Activated CD4-positive, alpha-beta memory T cell treated with anti-CD3 and anti-CD28 coated beads for 36 hours (primary cell): ENCODE measurements at regions of chr1 and their contacts with region 1.

Region 1: DNA sequence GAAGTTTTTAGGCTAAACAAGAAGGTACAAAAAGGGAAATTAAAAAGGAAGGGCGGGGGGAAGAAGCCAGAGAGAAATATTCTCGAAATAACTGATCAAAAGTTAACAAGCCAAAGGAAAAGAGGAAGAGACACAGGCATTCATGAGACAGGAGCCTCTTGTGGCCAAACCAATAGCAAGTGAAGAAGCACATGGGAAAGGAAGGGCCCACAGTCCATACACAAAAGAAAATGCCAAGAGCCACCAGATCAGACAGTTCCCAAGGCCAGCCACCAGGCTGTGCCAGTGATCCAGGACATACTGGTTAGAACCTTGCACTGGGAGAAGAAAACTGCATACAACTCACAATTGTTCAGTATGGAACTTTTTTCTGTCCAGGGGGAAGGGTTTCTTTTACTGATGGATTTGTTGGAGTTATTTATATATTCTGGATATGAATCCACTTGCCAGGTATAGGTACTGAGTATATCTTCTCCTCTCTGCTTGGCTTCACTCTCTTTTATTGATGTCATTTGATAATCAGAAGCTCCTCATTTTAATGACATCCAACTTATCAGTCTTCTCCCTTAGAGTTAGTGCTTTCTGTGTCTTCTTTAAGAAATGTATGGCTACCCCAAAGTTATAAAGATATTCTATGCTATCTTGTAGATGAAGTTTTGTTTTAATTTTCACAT is 76.8 kb downstream of the CD46 start:
- DNase-seq: peak; percentile 79
- H3K4me3 Mint-ChIP-seq: no peak overlapping the region
- H3K27ac Mint-ChIP-seq: peak overlapping the region; percentile 11
- H3K4me1 Mint-ChIP-seq: peaks cover 97% of the 10 kb centered on the region
- H3K27me3 Mint-ChIP-seq: peaks cover 2% of the 10 kb centered on the region

Region 2: DNA sequence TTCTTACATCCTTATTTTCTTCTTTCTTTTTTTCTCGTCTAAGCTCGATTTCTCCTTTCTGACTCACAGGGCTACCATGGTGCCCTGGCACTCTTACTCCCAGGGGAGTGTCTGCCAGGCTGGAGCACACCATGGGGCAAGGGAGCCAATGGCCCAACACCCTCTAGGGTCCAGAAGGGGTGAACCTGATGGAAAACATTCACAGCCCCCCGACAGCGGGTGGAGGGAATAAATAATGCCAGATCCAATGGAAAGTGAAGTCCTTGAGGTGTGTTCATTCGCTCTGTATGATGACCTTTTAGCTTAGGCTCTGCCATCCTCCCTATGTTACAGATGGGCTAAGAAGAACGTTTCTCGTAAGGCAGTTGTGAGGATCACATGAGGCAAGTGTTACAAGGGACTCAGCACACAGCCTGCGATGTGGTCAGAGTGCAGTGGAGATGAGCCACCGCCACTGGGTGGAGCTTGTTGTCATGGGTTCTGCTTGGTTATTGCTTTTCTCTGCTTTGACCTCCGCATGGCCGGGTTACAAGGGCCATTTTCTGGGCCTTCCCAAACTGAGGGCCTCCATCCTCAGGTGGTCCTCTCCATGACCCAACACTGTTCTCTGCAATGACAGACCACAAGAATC is 903.4 kb before region 1 on chr1:
- CTCF ChIA-PET with region 1: no interaction called
- POLR2A ChIA-PET with region 1: no interaction called
- intact Hi-C with region 1: loop called (anchors 10 kb)
- DNase-seq: peak; percentile 82
- H3K4me3 Mint-ChIP-seq: no peak overlapping the region
- H3K27ac Mint-ChIP-seq: no peak overlapping the region
- H3K4me1 Mint-ChIP-seq: peaks cover 33% of the 10 kb centered on the region
- H3K27me3 Mint-ChIP-seq: no peaks in the 10 kb centered on the region

Region 3: DNA sequence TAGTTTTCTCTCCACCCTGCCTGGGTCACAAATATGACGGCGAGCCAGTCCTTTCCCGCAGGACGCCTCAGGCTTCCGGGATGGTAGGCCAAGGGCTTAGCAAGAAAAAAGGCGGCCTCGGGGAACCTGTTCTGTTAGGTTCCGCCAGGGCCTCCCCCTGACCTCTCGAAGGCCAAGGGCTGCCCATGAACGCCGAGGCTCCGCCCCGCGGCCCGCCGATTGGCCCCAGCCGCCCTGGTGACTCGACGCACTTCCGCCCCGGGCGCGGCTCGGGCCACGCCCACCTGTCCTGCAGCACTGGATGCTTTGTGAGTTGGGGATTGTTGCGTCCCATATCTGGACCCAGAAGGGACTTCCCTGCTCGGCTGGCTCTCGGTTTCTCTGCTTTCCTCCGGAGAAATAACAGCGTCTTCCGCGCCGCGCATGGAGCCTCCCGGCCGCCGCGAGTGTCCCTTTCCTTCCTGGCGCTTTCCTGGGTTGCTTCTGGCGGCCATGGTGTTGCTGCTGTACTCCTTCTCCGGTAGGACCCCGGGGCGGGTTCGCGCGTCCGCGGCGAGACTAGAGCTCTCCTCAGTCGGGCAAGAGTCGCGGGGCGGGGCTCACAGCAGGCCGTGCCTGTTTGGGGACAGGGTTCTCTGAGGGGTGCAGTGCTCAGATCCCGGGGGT is 76.7 kb before region 1 on chr1 and contains the start of gene CD46:
- CTCF ChIA-PET with region 1: interaction called, 4 read pairs
- POLR2A ChIA-PET with region 1: interaction called, 7 read pairs
- intact Hi-C with region 1: loop called (anchors 2 kb)
- DNase-seq: peak; percentile 97
- H3K4me3 Mint-ChIP-seq: peak within 1 kb of the TSS; percentile 94
- H3K27ac Mint-ChIP-seq: peak within 1 kb of the TSS; percentile 96
- H3K4me1 Mint-ChIP-seq: peaks cover 60% of the 10 kb centered on the region
- H3K27me3 Mint-ChIP-seq: no peaks in the 10 kb centered on the region
- total RNA-seq, gene CD46: 94.6 to 96.9 TPM

Region 4: GRCh38 chr1:207811920-207812720 is 16.5 kb before region 1 on chr1:
- CTCF ChIA-PET with region 1: interaction called, 23 read pairs
- POLR2A ChIA-PET with region 1: interaction called, 5 read pairs
- intact Hi-C with region 1: loop called (anchors 1 kb)
- DNase-seq: no peak
- H3K4me3 Mint-ChIP-seq: no peak overlapping the region
- H3K27ac Mint-ChIP-seq: peak overlapping the region; percentile 74
- H3K4me1 Mint-ChIP-seq: peaks cover 86% of the 10 kb centered on the region
- H3K27me3 Mint-ChIP-seq: no peaks in the 10 kb centered on the region

Region 5: GRCh38 chr1:207863893-207864535 is 35.4 kb after region 1 on chr1:
- CTCF ChIA-PET with region 1: interaction called, 460 read pairs
- POLR2A ChIA-PET with region 1: interaction called, 24 read pairs
- intact Hi-C with region 1: loop called (anchors 1 kb)
- DNase-seq: peak; percentile 68
- H3K4me3 Mint-ChIP-seq: peak overlapping the region; percentile 6
- H3K27ac Mint-ChIP-seq: peak overlapping the region; percentile 83
- H3K4me1 Mint-ChIP-seq: peaks cover 64% of the 10 kb centered on the region
- H3K27me3 Mint-ChIP-seq: no peaks in the 10 kb centered on the region

Region 6: DNA sequence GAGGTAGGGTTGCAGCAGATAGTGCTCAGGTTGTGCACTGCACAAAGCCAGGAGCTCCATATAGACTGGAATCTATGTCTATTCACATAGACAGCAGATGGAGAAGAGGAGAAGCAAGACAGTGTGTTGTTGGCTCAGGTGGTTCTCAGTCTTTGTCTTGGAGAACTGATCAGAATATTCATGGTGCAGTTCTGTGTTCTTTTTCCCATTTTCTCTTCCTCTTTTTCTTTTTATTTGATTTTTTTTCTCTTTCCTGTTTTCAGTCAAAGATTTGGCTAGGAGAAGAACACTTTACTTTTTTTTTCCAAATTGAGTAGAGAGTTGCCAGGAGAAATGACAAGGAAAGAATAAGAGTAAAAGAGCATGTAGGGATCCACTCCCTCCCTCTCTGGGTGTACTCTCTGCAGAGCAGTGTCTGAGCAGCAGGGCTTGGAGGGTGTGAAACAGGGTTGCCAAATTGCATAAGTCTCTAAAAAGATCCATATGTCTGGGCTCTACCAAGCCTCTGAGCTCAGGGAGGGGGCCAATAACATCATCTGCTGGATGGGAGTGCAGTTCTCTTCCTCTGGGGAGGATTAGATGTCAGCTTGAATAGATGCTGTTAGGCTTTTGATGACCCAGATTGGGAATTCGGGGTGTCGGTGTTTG is 91.0 kb after region 1 on chr1:
- CTCF ChIA-PET with region 1: no interaction called
- POLR2A ChIA-PET with region 1: no interaction called
- intact Hi-C with region 1: no loop called
- DNase-seq: no peak
- H3K4me3 Mint-ChIP-seq: no peak overlapping the region
- H3K27ac Mint-ChIP-seq: no peak overlapping the region
- H3K4me1 Mint-ChIP-seq: no peaks in the 10 kb centered on the region
- H3K27me3 Mint-ChIP-seq: peaks cover 21% of the 10 kb centered on the region

Region 7: DNA sequence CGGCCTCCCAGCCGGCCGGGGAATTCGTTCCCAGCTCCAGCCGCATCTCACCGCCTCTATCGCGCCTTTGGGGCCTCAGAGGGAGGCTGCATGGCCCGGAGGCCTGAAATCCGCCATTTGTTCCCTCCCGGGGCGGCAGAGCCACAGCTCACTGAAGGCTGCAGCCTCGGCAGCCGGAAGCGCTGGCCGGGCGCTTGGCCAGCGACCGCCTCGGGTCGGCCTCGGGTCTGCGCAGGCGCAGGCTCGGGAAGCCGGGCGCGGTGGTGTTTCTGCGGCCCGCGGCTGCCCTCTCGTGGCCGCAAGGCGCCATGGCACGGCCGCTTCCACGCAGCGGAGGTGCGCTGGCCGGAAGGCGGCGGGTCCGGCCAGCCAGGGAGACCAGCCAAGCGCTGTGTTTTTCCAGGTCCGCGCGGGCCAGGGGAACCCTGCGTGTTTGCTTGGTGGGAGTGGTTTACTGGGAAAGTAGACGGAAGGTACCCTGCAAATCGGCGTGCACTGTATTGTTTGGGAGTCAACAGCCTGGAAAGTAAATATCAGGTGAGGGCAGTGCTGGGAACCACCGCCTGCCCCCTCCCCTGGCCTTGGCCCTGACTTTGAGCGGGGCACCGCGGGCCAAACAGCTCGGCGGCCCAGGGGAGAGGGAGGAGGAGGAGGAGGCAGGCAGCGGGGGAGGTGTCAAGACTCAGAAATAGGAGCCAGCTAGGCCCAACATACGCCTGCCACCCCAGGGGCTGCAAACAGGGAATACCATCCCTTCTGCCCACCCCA is 135.0 kb after region 1 on chr1:
- CTCF ChIA-PET with region 1: interaction called, 89 read pairs
- POLR2A ChIA-PET with region 1: no interaction called
- intact Hi-C with region 1: loop called (anchors 1 kb)
- DNase-seq: peak; percentile 89
- H3K4me3 Mint-ChIP-seq: peak overlapping the region; percentile 81
- H3K27ac Mint-ChIP-seq: no peak overlapping the region
- H3K4me1 Mint-ChIP-seq: peaks cover 9% of the 10 kb centered on the region
- H3K27me3 Mint-ChIP-seq: peaks cover 24% of the 10 kb centered on the region

Region 8: GRCh38 chr1:208159555-208160258 is 331.1 kb after region 1 on chr1:
- CTCF ChIA-PET with region 1: no interaction called
- POLR2A ChIA-PET with region 1: no interaction called
- intact Hi-C with region 1: no loop called
- DNase-seq: no peak
- H3K4me3 Mint-ChIP-seq: no peak overlapping the region
- H3K27ac Mint-ChIP-seq: no peak overlapping the region
- H3K4me1 Mint-ChIP-seq: no peaks in the 10 kb centered on the region
- H3K27me3 Mint-ChIP-seq: peaks cover 11% of the 10 kb centered on the region